Activated CD4-positive, alpha-beta T cell treated with anti-CD3 and anti-CD28 coated beads for 36 hours (primary cell): ENCODE measurements at regions of chr1 and their contacts with region 1.

Region 1: DNA sequence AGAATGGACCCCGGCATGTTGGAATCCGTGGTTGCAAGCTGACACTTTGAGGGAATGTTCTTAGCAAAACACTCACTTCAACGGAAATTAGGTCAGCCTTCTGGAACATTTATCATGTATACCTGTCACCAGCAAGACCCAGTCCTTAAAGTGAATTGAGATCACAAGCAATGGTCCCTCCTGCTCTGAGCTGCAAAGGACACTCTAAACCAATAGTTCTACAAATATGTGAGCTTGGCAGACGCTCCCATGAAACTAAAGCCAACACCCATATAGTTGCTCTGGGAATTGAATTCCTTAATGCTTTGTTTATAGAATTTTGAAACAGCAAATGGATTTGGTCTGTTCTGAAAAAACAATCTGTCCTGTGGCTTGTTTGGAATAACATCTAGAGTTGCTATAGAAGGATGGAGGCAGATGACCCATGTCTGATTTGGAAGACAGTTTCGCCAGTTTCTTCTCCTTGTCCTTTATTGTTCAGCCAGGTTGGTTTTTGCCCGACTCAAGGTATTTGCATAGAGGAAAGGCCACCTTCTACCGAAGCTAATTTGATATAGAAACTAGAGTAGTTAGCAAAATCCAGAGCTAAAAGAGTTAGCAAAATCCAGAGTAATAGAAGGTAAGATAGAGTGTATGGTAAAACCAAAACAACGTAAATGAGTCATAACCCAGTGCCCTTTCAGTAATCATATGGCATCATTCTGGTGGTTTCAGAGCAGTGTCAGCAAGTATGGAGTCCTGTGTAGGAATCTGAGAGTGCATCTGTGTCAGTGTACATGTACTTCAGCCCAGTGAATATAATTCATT is 236.2 kb downstream of the NFIA start:
- DNase-seq: peak; percentile 46
- ATAC-seq: peak; percentile 93
- H3K4me3 Mint-ChIP-seq: no peak overlapping the region
- H3K27ac Mint-ChIP-seq: peak overlapping the region; percentile 91
- H3K4me1 Mint-ChIP-seq: peaks cover 38% of the 10 kb centered on the region
- H3K27me3 Mint-ChIP-seq: peaks cover 8% of the 10 kb centered on the region

Region 2: DNA sequence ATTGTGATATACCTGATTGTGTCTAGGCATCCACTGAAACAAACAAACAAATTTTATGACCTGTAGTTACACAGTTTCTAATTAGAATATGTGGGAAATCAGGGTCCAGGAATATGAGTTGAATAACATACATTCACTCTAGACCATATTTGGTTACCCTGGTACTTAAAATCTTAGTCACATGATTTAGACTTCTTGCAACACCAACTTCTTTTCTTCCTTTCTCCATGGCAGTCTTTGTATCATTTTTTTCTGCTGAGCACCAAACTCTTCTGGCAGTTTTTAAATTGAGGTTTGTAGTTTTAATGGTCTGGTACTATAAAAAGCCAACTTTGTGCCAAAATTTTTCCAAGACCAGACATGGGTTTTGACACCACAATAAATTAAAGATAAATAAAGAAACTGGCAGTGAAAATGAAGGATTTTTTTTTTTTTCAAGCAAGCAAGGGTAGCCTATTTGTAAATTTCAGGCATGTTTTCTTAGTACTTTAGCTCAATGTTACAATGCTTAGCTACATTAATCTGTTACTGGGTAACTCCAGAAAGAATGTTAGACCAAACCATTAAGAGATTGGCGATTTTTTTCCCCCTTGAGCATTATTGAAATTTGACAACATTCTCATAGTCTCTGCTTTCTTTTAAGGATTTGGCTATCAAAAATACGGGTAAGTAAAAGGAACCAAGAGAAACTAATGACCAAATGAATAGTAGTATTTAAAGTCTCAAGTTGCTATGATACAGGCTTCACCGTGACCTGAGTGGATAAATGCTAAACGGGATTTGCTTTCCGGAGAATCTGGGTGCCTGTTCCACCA is 127.7 kb before region 1 on chr1:
- CTCF ChIA-PET with region 1: no interaction called
- POLR2A ChIA-PET with region 1: no interaction called
- intact Hi-C with region 1: no loop called
- DNase-seq: no peak
- ATAC-seq: no peak
- H3K4me3 Mint-ChIP-seq: no peak overlapping the region
- H3K27ac Mint-ChIP-seq: no peak overlapping the region
- H3K4me1 Mint-ChIP-seq: no peaks in the 10 kb centered on the region
- H3K27me3 Mint-ChIP-seq: no peaks in the 10 kb centered on the region

Region 3: GRCh38 chr1:61270761-61271411 is 47.6 kb before region 1 on chr1:
- CTCF ChIA-PET with region 1: interaction called, 9 read pairs
- POLR2A ChIA-PET with region 1: interaction called, 14 read pairs
- intact Hi-C with region 1: loop called (anchors 1 kb)
- DNase-seq: peak; percentile 49
- ATAC-seq: peak; percentile 86
- H3K4me3 Mint-ChIP-seq: no peak overlapping the region
- H3K27ac Mint-ChIP-seq: peak overlapping the region; percentile 76
- H3K4me1 Mint-ChIP-seq: peaks cover 40% of the 10 kb centered on the region
- H3K27me3 Mint-ChIP-seq: peaks cover 5% of the 10 kb centered on the region

Region 4: DNA sequence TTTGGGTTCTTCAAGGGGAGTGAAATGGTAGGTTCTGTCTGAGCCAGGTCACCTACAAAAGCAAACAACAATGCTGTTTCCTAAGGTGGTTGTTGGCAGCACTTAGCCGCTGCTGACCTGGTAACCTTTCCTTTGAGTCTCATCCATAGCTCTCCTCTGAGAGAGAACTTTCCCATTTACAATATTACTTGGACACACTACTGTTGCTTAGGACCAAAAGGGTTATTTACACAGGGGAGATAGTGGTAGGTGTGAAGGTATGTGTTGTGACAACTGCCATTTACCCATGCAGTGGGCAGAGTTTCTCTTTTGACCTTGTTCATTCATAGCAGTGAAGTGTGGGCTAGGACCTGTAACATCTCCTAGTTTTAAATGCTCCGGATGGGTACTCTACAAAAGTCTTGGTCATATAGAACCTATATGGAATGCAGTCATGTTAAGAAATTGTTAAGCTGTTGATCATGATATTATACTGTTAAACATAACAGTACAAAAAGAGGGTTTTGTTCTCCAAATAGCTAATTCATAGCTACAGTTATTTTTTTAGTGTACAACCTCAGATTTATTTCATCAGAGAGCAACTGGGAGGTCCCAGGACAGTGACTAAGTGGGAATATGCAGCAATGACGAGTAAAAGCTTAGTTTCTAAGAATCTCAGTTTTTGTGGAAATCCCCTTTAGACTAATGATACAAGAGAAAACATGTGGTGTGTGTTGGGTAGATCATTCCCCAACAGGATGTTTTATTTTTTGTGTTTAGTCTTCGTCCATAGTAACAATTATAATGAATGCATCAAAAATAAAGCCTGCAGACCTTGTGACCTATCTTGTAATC is 16.5 kb before region 1 on chr1:
- CTCF ChIA-PET with region 1: interaction called, 13 read pairs
- POLR2A ChIA-PET with region 1: interaction called, 29 read pairs
- intact Hi-C with region 1: loop called (anchors 1 kb)
- DNase-seq: peak; percentile 46
- ATAC-seq: peak; percentile 90
- H3K4me3 Mint-ChIP-seq: no peak overlapping the region
- H3K27ac Mint-ChIP-seq: peak overlapping the region; percentile 92
- H3K4me1 Mint-ChIP-seq: peaks cover 28% of the 10 kb centered on the region
- H3K27me3 Mint-ChIP-seq: peaks cover 3% of the 10 kb centered on the region

Region 5: GRCh38 chr1:61332196-61332753 is 13.8 kb after region 1 on chr1:
- CTCF ChIA-PET with region 1: interaction called, 7 read pairs
- POLR2A ChIA-PET with region 1: interaction called, 14 read pairs
- intact Hi-C with region 1: loop called (anchors 1 kb)
- DNase-seq: peak; percentile 40
- ATAC-seq: peak; percentile 94
- H3K4me3 Mint-ChIP-seq: no peak overlapping the region
- H3K27ac Mint-ChIP-seq: peak overlapping the region; percentile 48
- H3K4me1 Mint-ChIP-seq: peaks cover 21% of the 10 kb centered on the region
- H3K27me3 Mint-ChIP-seq: peaks cover 5% of the 10 kb centered on the region

Region 6: GRCh38 chr1:61724813-61725694 is 406.5 kb after region 1 on chr1 and contains the start of gene TM2D1:
- CTCF ChIA-PET with region 1: no interaction called
- POLR2A ChIA-PET with region 1: no interaction called
- intact Hi-C with region 1: loop called in 1 of 2 experiments (anchors 10 kb)
- DNase-seq: peak; percentile 92
- ATAC-seq: peak; percentile 93
- H3K4me3 Mint-ChIP-seq: peak within 1 kb of the TSS; percentile 97
- H3K27ac Mint-ChIP-seq: peak within 1 kb of the TSS; percentile 98
- H3K4me1 Mint-ChIP-seq: peaks cover 17% of the 10 kb centered on the region
- H3K27me3 Mint-ChIP-seq: no peaks in the 10 kb centered on the region
- total RNA-seq, gene TM2D1: 20.8 to 26.4 TPM